Activated T-helper 2 cell treated with anti-CD3 and anti-CD28 coated beads, Interferon-gamma antibody, Interleukin-2, Interleukin-4, amounts not matched to agents 10 μg/mL and 5 μg/mL and 100 μg/mL, durations not matched to agents 14 hours and 24 hours and 36 hours (primary cell): ENCODE measurements at regions of chr6 and their contacts with region 1.

Region 1: GRCh38 chr6:33391278-33391921 is at the start of gene KIFC1:
- DNase-seq: peak; percentile 99
- H3K4me3 Mint-ChIP-seq: peak within 1 kb of the TSS; percentile 87
- H3K27ac Mint-ChIP-seq: peak within 1 kb of the TSS; percentile 94
- H3K4me1 Mint-ChIP-seq: peaks cover 42% of the 10 kb centered on the region
- H3K27me3 Mint-ChIP-seq: no peaks in the 10 kb centered on the region
- total RNA-seq, gene KIFC1: 78.3 and 80.9 TPM in 2 replicates

Region 2: GRCh38 chr6:33271458-33272274 is 119.7 kb before region 1 on chr6 and contains the starts of genes RPS18 and VPS52:
- intact Hi-C with region 1: loop called (anchors 1 kb)
- DNase-seq: peak; percentile 92
- H3K4me3 Mint-ChIP-seq: peak within 1 kb of the TSS; percentile 98
- H3K27ac Mint-ChIP-seq: peak within 1 kb of the TSS; percentile 100
- H3K4me1 Mint-ChIP-seq: peaks cover 31% of the 10 kb centered on the region
- H3K27me3 Mint-ChIP-seq: no peaks in the 10 kb centered on the region
- total RNA-seq, gene RPS18: 3,099 and 3,143 TPM in 2 replicates
- total RNA-seq, gene VPS52: 53.4 and 56.7 TPM in 2 replicates

Region 3: DNA sequence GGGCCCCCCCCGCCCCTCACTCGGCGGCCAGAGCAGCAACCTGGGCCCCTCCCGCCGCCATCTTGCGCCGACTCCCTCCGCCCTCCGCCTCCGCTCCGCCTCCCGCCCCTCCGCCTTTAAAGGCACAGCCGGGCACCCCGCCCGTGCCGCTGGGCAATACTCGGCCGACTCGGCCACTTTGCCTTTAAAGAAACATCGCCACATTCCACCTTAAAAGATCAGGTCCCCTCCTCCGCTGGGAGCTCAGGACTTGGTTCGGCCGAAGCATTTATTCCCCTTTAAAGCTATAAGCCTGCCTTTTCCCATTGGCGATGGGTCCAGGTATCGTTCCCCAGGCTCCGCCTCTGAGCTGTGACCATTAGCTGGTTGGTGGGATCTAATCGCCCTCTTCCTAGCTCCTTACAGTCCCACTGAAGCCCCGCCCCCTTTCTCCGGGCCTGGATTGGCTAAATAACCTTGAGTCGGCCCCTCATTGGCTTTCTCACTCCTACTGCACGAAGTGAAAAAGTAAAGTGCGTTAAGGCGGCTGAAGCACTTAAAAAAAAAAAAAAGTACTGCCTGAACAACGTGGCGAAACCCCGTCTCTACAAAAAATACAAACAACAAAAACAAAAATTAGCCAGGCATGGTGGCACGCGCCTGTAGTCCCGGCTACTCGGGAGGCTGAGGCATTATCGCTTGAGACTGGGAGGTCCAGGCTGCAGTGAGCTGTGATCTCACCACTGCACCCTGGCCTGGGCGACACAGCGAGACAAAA is 73.6 kb before region 1 on chr6 and contains the start of gene ZBTB22:
- intact Hi-C with region 1: loop called (anchors 1 kb)
- DNase-seq: peak; percentile 95
- H3K4me3 Mint-ChIP-seq: peak within 1 kb of the TSS; percentile 99
- H3K27ac Mint-ChIP-seq: peak within 1 kb of the TSS; percentile 97
- H3K4me1 Mint-ChIP-seq: peaks cover 52% of the 10 kb centered on the region
- H3K27me3 Mint-ChIP-seq: no peaks in the 10 kb centered on the region
- total RNA-seq, gene ZBTB22: 10.9 and 14.4 TPM in 2 replicates

Region 4: GRCh38 chr6:33410050-33410710 is 18.8 kb after region 1 on chr6:
- intact Hi-C with region 1: loop called (anchors 1 kb)
- DNase-seq: peak; percentile 98
- H3K4me3 Mint-ChIP-seq: peak overlapping the region; percentile 88
- H3K27ac Mint-ChIP-seq: peak overlapping the region; percentile 93
- H3K4me1 Mint-ChIP-seq: peaks cover 38% of the 10 kb centered on the region
- H3K27me3 Mint-ChIP-seq: no peaks in the 10 kb centered on the region

Region 5: DNA sequence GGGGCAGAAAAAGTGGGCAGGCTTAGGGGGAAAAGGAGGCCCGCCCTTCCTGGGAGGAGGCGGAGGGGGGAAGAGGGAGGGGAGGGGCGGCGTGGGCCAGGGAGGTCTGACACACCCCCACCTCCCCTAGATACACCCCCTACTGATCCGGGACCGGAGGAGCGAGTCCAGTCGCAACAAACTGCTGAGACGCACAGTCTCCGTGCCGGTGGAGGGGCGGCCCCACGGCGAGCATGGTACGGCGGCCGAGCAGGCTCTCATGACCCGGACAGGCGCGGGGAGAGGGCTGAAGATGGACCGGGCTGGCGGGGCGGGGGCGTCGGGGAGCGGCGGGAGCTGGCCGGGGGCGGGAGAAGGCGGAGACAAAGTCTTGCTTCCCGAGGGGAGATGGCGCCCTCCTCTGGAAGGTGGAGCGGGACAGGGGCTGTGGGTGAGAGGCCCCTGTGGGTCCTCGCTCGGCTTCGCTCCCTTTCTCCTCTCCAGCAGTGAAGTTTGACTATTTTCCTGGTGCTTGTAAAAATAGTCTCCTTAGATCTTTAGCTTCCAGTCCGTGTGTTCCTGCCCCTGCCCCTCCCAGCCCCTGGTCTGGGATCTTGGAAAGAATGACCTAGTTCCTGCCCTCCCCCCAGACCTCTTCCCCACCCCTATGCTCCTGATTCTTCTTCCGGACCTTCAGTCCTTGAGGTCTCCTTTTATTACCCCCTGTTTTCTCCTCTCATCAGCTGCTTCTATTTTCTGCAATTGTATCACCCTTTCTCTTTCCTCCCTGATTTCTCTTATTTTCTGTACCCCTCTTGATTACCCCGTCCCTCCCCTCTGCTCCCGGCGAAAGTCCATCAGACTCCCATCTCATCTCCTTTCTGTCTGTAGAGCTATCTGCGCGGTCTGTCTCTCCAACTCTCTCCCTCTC is 34.5 kb after region 1 on chr6:
- intact Hi-C with region 1: loop called (anchors 1 kb)
- DNase-seq: peak; percentile 73
- H3K4me3 Mint-ChIP-seq: peak overlapping the region; percentile 88
- H3K27ac Mint-ChIP-seq: peak overlapping the region; percentile 90
- H3K4me1 Mint-ChIP-seq: peaks cover 77% of the 10 kb centered on the region
- H3K27me3 Mint-ChIP-seq: no peaks in the 10 kb centered on the region